ENCODE measurements at regions of chr20 and their contacts with region 1.

Region 1: GRCh38 chr20:44609511-44610312 is 27.3 kb downstream of the PKIG start:
- DNase-seq: no peak
- ATAC-seq: peak; percentile 98
- H3K4me3 ChIP-seq: no peak overlapping the region
- H3K27ac ChIP-seq: peak overlapping the region; percentile 57
- H3K4me1 ChIP-seq: peaks cover 13% of the 10 kb centered on the region
- H3K27me3 ChIP-seq: no peaks in the 10 kb centered on the region
- CTCF ChIP-seq: peak; percentile 98 to 99 (median 99); a peak in 5 of 6 replicates
- EP300 ChIP-seq: no peak
- POLR2A ChIP-seq: no peak
- RAD21 ChIP-seq: peak; percentile 99

Region 2: DNA sequence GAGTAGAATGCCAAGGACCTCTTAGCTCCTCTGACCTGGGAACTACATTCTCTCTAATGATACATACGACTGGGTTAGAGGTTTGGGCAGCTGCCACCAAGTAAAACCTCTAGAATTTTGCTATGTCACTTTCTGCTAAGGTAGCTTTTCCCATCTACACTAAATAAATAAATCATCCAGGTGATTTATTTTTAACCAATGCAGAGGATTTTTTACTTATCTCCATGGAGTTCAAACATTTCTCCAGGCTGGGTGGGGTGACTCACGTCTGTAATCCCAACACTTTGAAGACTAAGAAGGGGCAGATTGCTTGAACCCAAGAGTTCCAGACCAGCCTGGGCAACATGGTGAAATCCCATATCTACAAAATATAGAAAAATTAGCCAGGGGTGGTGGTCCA is 227.1 kb before region 1 on chr20:
- CTCF ChIA-PET with region 1: interaction called, 10 read pairs
- POLR2A ChIA-PET with region 1: no interaction called
- RAD21 ChIA-PET with region 1: interaction called, 5 read pairs
- SMC1A ChIA-PET with region 1: interaction called, 17 read pairs
- in situ Hi-C with region 1: loop called (anchors 5 kb)
- intact Hi-C with region 1: no loop called
- DNase-seq: no peak
- ATAC-seq: no peak
- H3K4me3 ChIP-seq: no peak overlapping the region
- H3K27ac ChIP-seq: no peak overlapping the region
- H3K4me1 ChIP-seq: no peaks in the 10 kb centered on the region
- H3K27me3 ChIP-seq: no peaks in the 10 kb centered on the region
- CTCF ChIP-seq: no peak
- EP300 ChIP-seq: no peak
- POLR2A ChIP-seq: no peak
- RAD21 ChIP-seq: no peak

Region 3: GRCh38 chr20:44521484-44522481 is 87.9 kb before region 1 on chr20 and contains the start of gene SERINC3:
- CTCF ChIA-PET with region 1: interaction called, 7 read pairs
- POLR2A ChIA-PET with region 1: no interaction called
- RAD21 ChIA-PET with region 1: interaction called, 7 read pairs
- SMC1A ChIA-PET with region 1: interaction called, 4 read pairs
- in situ Hi-C with region 1: no loop called
- intact Hi-C with region 1: loop called (anchors 5 kb)
- DNase-seq: peak; percentile 78
- ATAC-seq: peak; percentile 98
- H3K4me3 ChIP-seq: peak within 1 kb of the TSS; percentile 94
- H3K27ac ChIP-seq: peak within 1 kb of the TSS; percentile 93
- H3K4me1 ChIP-seq: peaks cover 7% of the 10 kb centered on the region; the same call in 1 of the 2 replicates
- H3K27me3 ChIP-seq: no peaks in the 10 kb centered on the region
- CTCF ChIP-seq: peak in 2 of 3 experiments; percentile 27 to 29; a peak in 3 of 6 replicates
- EP300 ChIP-seq: peak; percentile 23 to 25; a peak in 1 of 4 replicates
- POLR2A ChIP-seq: peak; percentile 95
- RAD21 ChIP-seq: peak; percentile 29; the same call in 1 of the 2 replicates
- polyA plus RNA-seq, gene SERINC3: 37.8 to 55.6 TPM

Region 4: GRCh38 chr20:44582311-44583025 is 27.2 kb before region 1 on chr20 and contains the start of gene PKIG:
- CTCF ChIA-PET with region 1: interaction called, 158 read pairs
- POLR2A ChIA-PET with region 1: interaction called, 9 read pairs
- RAD21 ChIA-PET with region 1: interaction called, 97 read pairs
- SMC1A ChIA-PET with region 1: interaction called, 144 read pairs
- in situ Hi-C with region 1: no loop called
- intact Hi-C with region 1: no loop called
- DNase-seq: no peak
- ATAC-seq: peak; percentile 8
- H3K4me3 ChIP-seq: peak within 1 kb of the TSS; percentile 29
- H3K27ac ChIP-seq: peak within 1 kb of the TSS; percentile 77
- H3K4me1 ChIP-seq: peaks cover 80% of the 10 kb centered on the region
- H3K27me3 ChIP-seq: no peaks in the 10 kb centered on the region
- CTCF ChIP-seq: no peak
- EP300 ChIP-seq: 0 out of 4 replicates have a peak, but pooled peaks of 1 of the 2 experiments have one; percentile 6
- POLR2A ChIP-seq: no peak
- RAD21 ChIP-seq: no peak
- polyA plus RNA-seq, gene PKIG: 5.7 to 17.5 TPM

Region 5: DNA sequence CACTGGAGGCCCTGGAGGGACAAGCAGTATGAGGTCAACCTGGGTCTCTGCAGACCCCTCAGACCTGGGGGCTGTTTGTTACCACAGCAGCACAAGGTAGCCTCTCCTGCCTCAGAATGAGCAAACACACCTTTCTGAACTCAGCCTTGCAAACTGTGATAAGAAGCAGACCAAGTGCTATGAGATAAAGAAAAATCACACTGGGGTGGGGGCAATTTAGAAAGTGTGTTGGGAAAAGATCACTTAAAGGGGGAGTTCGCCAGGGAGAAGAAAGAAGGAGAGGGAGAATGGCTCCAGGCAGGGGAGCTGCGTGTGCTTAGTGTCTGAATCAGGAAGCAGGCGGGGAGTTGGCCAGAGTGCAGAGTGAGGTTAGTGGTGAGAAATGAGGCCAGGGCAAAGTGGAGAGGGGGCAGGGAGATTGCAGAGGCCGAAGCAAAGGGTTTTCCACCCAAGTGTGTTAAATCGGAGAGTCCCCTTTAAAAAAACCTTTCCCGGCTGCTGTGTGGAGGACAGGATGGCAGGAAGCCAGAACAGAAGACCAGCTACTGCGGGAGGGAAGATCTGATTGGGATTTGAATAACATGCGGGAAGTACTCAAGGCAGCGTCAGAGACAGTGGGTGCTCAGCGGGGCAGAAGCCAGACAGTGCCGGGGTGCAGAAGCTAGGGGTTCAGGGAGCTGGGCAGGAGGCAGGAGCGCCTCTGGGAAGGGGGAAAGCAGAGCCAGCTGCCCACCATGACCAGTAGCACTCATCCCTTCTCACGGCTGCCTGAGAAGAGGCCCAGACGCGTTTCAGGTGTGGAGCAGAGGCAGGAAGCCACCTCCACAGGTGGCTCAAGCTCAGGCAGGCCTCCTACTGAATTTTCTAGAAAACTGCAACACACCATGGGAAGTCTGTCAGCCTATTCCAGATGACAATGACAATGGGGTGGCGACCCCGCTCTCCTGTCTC is 32.8 kb after region 1 on chr20:
- CTCF ChIA-PET with region 1: interaction called, 12 read pairs
- POLR2A ChIA-PET with region 1: interaction called, 3 read pairs
- RAD21 ChIA-PET with region 1: interaction called, 13 read pairs
- SMC1A ChIA-PET with region 1: interaction called, 16 read pairs
- in situ Hi-C with region 1: no loop called
- intact Hi-C with region 1: loop called (anchors 2 kb)
- DNase-seq: peak; percentile 77
- ATAC-seq: peak; percentile 65
- H3K4me3 ChIP-seq: peak overlapping the region; percentile 16; the same call in 1 of the 2 replicates
- H3K27ac ChIP-seq: peak overlapping the region; percentile 99
- H3K4me1 ChIP-seq: peaks cover 68% of the 10 kb centered on the region
- H3K27me3 ChIP-seq: no peaks in the 10 kb centered on the region
- CTCF ChIP-seq: peak; percentile 18 to 42 (median 22); a peak in 5 of 6 replicates
- EP300 ChIP-seq: peak in 1 of 2 experiments; percentile 17; a peak in 1 of 4 replicates
- POLR2A ChIP-seq: peak; percentile 51; the same call in 1 of the 2 replicates
- RAD21 ChIP-seq: 0 out of 2 replicates have a peak, but pooled peaks have one; percentile 17

Region 6: DNA sequence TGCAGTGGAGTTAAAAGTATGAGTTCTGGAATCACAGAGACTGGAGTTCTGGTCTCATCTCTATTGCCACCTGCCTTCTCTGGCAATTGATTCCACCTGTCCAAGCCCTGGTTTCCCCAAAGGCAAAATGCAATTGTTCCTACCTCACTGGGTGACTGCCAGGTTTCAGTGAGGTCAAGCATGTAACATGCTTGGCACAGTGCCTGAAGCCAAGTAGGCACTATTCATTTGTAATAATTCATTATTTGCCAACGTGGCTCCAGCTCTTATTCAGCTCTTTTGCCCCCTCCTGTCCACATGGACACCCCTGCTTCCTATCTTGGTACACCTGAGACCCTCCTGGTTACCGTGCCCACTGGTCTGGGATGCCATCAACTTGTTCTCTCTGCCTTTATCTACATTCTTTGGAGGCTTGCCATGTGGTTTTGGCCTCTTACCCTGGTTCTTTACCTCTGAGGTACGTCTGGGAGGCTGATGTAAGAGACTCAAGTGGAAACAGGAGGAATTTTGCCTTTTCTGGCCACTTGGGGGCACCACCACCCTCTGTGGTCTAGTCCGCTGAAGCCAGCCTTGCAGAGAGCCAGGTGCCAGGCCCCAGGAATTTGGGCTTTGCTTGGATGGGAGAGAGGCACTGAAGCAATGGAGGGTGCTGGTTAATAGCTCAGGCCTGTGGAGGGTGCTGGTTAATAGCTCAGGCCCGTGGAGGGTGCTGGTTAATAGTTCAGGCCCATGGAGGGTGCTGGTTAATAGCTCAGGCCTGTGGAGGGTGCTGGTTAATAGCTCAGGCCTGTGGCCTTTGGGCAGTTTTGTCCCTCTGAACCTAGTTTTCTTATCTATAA is 137.7 kb after region 1 on chr20:
- CTCF ChIA-PET with region 1: no interaction called
- POLR2A ChIA-PET with region 1: no interaction called
- RAD21 ChIA-PET with region 1: no interaction called
- SMC1A ChIA-PET with region 1: no interaction called
- in situ Hi-C with region 1: no loop called
- intact Hi-C with region 1: no loop called
- DNase-seq: no peak
- ATAC-seq: peak; percentile 81
- H3K4me3 ChIP-seq: no peak overlapping the region
- H3K27ac ChIP-seq: no peak overlapping the region
- H3K4me1 ChIP-seq: no peaks in the 10 kb centered on the region
- H3K27me3 ChIP-seq: peaks cover 13 to 16% of the 10 kb centered on the region in 2 experiments
- CTCF ChIP-seq: peak; percentile 66 to 78 (median 73)
- EP300 ChIP-seq: no peak
- POLR2A ChIP-seq: no peak
- RAD21 ChIP-seq: peak; percentile 49